ENCODE measurements at regions of chr1 and their contacts with region 1.

Region 1: GRCh38 chr1:168683871-168684270 is 45.1 kb downstream of the DPT start:
- DNase-seq: no peak
- ATAC-seq: no peak
- H3K4me3 ChIP-seq: no peak overlapping the region
- H3K27ac ChIP-seq: no peak overlapping the region
- H3K4me1 ChIP-seq: peaks cover 27% of the 10 kb centered on the region
- H3K27me3 ChIP-seq: no peaks in the 10 kb centered on the region
- CTCF ChIP-seq: no peak
- POLR2A ChIP-seq: no peak

Region 2: DNA sequence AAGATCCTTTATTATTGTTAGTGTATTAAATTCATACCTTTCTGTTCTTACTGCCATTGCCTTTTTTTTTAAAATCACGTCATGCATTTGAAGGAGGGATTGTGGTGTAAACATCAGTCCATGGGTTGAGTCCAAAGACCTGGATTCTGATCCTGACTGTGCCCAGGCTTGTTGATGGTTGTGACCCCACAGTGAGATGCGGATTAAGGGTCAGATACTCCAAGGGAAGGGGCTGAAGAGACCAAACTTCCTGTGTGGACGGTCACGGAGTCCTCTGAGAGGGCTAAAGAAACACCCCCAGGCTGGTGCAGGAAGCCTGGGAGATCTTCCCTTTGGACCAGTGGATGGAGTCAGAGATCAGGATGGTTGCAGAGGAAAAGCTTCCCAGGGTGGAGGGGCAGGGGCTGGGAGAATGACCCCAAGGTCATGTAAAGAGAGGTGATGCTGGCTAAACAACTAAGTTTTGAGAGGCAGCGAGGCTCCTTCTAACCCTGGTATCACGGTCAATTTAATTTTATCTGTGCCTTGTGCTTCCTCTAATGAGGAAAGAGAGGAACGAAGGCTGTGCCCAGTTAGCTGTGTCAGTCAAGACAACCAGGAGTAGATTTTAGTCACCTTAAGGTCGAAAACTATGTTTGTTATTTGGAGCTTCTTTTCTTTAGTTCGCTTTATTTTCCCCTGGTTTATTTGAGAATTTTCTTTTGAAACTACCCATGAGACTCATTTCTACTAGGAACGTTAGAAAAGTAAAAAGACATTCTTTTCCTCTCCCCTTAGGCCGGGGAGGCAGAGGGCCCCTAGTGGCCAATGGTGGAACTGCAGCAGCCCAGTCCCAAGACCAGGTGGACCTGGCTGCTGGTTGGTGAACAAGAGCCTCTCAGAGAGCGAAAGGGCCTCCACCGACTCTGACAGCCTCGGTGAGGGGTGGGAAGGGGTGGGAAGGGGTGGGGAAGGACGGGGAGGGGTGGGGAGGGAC is 538.4 kb before region 1 on chr1:
- intact Hi-C with region 1: no loop called
- DNase-seq: peak; percentile 86 to 90 (median 88)
- ATAC-seq: peak; percentile 98
- H3K4me3 ChIP-seq: no peak overlapping the region
- H3K27ac ChIP-seq: no peak overlapping the region
- H3K4me1 ChIP-seq: no peaks in the 10 kb centered on the region
- H3K27me3 ChIP-seq: no peaks in the 10 kb centered on the region
- CTCF ChIP-seq: peak; percentile 84 to 100 (median 93)
- POLR2A ChIP-seq: no peak

Region 3: GRCh38 chr1:168755800-168756418 is 72.0 kb after region 1 on chr1:
- intact Hi-C with region 1: loop called (anchors 5 kb)
- DNase-seq: no peak
- ATAC-seq: peak; percentile 30
- H3K4me3 ChIP-seq: no peak overlapping the region
- H3K27ac ChIP-seq: no peak overlapping the region
- H3K4me1 ChIP-seq: peaks cover 9% of the 10 kb centered on the region
- H3K27me3 ChIP-seq: no peaks in the 10 kb centered on the region
- CTCF ChIP-seq: no peak
- POLR2A ChIP-seq: no peak

Measured in body of pancreas (tissue), 4 donors.